T-cell (primary cell): ENCODE measurements at regions of chr11 and their contacts with region 1.

Region 1: GRCh38 chr11:113147249-113147648 is 167.1 kb upstream of the TTC12 start:
- DNase-seq: no peak
- ATAC-seq: no peak
- H3K4me3 ChIP-seq: no peak overlapping the region
- H3K4me3 Mint-ChIP-seq: no peak overlapping the region
- H3K27ac ChIP-seq: no peak overlapping the region
- H3K27ac Mint-ChIP-seq: no peak overlapping the region
- H3K4me1 ChIP-seq: no peaks in the 10 kb centered on the region
- H3K4me1 Mint-ChIP-seq: no peaks in the 10 kb centered on the region
- H3K27me3 ChIP-seq: peaks cover 0 to 2% of the 10 kb centered on the region in 2 experiments
- H3K27me3 Mint-ChIP-seq: peaks cover 11 to 17% of the 10 kb centered on the region in 2 donors

Region 2: DNA sequence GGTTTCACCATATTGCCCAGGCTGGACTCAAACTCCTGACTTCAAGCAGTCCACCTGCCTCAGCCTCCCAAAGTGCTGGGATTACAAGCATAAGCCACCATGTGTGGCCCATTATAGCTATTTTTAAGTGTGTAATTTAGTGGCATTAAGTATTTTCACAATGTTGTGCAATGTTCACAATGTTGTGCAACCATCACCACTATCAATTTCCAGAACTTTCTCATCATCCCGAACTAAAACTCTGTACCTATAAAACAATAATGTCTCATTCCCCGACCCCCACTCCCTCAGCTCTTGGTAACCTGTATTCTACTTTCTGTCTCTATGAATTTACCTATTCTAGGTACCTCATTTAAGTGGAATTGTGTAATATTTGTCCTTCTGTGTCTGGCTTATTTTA is 1260.4 kb before region 1 on chr11:
- CTCF ChIA-PET with region 1: no interaction called
- POLR2A ChIA-PET with region 1: no interaction called
- DNase-seq: no peak
- ATAC-seq: no peak
- H3K4me3 ChIP-seq: no peak overlapping the region
- H3K4me3 Mint-ChIP-seq: no peak overlapping the region
- H3K27ac ChIP-seq: no peak overlapping the region
- H3K27ac Mint-ChIP-seq: no peak overlapping the region
- H3K4me1 ChIP-seq: no peaks in the 10 kb centered on the region
- H3K4me1 Mint-ChIP-seq: no peaks in the 10 kb centered on the region
- H3K27me3 ChIP-seq: no peaks in the 10 kb centered on the region
- H3K27me3 Mint-ChIP-seq: no peaks in the 10 kb centered on the region

Region 3: GRCh38 chr11:112518371-112518770 is 628.9 kb before region 1 on chr11:
- CTCF ChIA-PET with region 1: no interaction called
- POLR2A ChIA-PET with region 1: interaction called in 1 of 2 experiments, 11 read pairs
- DNase-seq: no peak
- ATAC-seq: no peak
- H3K4me3 ChIP-seq: no peak overlapping the region
- H3K4me3 Mint-ChIP-seq: no peak overlapping the region
- H3K27ac ChIP-seq: no peak overlapping the region
- H3K27ac Mint-ChIP-seq: no peak overlapping the region
- H3K4me1 ChIP-seq: peaks cover 0 to 5% of the 10 kb centered on the region in 2 experiments
- H3K4me1 Mint-ChIP-seq: peaks cover 2 to 19% (median 11%) of the 10 kb centered on the region in 3 donors
- H3K27me3 ChIP-seq: peaks cover 0 to 7% of the 10 kb centered on the region in 2 experiments
- H3K27me3 Mint-ChIP-seq: peaks cover 3 to 10% of the 10 kb centered on the region in 2 donors

Region 4: GRCh38 chr11:113162592-113162962 is 15.3 kb after region 1 on chr11:
- CTCF ChIA-PET with region 1: no interaction called
- POLR2A ChIA-PET with region 1: no interaction called
- DNase-seq: no peak
- ATAC-seq: no peak
- H3K4me3 ChIP-seq: no peak overlapping the region
- H3K4me3 Mint-ChIP-seq: no peak overlapping the region
- H3K27ac ChIP-seq: no peak overlapping the region
- H3K27ac Mint-ChIP-seq: no peak overlapping the region
- H3K4me1 ChIP-seq: no peaks in the 10 kb centered on the region
- H3K4me1 Mint-ChIP-seq: no peaks in the 10 kb centered on the region
- H3K27me3 ChIP-seq: no peaks in the 10 kb centered on the region
- H3K27me3 Mint-ChIP-seq: peaks cover 6 to 11% of the 10 kb centered on the region in 2 donors

Region 5: DNA sequence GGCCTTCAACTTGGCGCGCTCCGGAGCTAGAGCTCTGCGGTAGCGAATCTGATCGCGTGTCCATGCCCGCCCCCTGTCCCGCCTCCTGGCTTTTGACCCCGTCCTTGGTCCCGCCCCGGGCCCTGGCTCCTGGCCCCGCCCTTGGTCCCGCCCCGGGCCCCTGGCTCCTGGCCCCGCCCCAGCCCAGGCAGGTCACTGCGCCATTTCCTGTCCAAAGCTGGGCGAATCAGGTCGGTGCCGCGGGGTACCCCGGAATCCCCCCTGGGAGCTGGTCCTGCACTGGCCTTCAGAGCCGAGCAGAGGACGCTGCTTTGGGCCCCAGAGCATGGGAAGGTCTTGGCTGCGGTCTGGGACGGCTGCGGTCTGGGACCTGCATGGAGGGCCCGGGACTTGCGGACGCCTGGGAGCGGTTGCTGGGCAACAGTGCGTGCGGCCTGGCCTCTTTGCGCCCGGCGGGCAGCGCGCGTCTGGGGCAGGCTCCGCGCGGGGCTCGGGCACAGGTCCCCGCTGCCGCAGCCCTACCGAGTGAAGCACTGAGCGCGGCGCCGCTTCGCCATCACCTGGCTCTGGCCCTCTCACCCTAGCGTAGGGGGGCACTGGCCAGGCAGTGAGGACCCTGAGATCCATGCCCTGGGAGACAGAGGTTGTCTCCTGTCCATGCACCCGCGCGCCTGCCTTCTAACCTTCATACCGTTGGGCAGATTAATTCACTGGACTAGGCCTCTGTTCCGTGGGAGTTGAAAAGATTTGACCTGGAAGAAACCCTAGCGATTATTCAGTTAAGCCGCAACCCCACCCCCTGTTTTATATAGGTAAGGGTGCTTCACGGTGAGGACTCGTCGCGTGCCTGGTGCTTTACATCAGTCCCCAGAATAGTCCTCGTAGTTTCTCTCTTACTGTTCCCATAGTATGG is 167.4 kb after region 1 on chr11 and contains the start of gene TTC12:
- CTCF ChIA-PET with region 1: no interaction called
- POLR2A ChIA-PET with region 1: no interaction called
- DNase-seq: peak; percentile 73 to 96 (median 86)
- ATAC-seq: peak; percentile 97 to 99 (median 98)
- H3K4me3 ChIP-seq: peak within 1 kb of the TSS; percentile 70
- H3K4me3 Mint-ChIP-seq: peak within 1 kb of the TSS; percentile 78 to 85 (median 84)
- H3K27ac ChIP-seq: peak within 1 kb of the TSS; percentile 90
- H3K27ac Mint-ChIP-seq: peak within 1 kb of the TSS; percentile 79 to 94
- H3K4me1 ChIP-seq: peaks cover 7 to 19% of the 10 kb centered on the region in 2 experiments
- H3K4me1 Mint-ChIP-seq: peaks cover 46 to 52% (median 49%) of the 10 kb centered on the region in 3 donors
- H3K27me3 ChIP-seq: no peaks in the 10 kb centered on the region
- H3K27me3 Mint-ChIP-seq: no peaks in the 10 kb centered on the region
- total RNA-seq, gene TTC12: 29.0 to 63.8 (median 45.2) TPM